ENCODE measurements at regions of chr4 and their contacts with region 1.

Region 1: GRCh38 chr4:56871371-56871866 is 36.3 kb upstream of the REST start:
- DNase-seq: no peak
- H3K4me3 ChIP-seq: no peak overlapping the region
- H3K27ac ChIP-seq: no peak overlapping the region
- H3K4me1 ChIP-seq: no peaks in the 10 kb centered on the region
- H3K27me3 ChIP-seq: no peaks in the 10 kb centered on the region
- CTCF ChIP-seq: no peak

Region 2: DNA sequence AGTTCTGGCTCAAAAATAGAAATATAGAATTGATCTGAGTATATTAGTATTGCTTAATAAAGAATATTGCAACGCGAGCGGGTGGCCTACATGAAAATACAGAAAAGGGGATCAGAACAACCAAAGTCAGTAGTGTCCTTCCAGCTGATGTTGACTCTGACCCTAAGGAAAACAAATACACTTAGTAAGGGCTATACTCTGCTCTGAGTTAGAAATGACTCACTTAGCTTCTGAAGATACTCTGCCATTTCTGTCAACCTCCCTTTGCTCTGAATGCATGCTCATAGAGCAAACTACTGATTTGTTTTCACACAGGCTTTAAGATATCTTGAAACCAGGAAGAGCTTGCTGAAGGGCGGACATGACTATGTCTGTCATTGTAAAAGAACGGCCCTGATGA is 1212.8 kb before region 1 on chr4:
- CTCF ChIA-PET with region 1: no interaction called
- POLR2A ChIA-PET with region 1: no interaction called
- intact Hi-C with region 1: no loop called
- DNase-seq: no peak
- H3K4me3 ChIP-seq: no peak overlapping the region
- H3K27ac ChIP-seq: no peak overlapping the region
- H3K4me1 ChIP-seq: no peaks in the 10 kb centered on the region
- H3K27me3 ChIP-seq: no peaks in the 10 kb centered on the region
- CTCF ChIP-seq: no peak

Region 3: DNA sequence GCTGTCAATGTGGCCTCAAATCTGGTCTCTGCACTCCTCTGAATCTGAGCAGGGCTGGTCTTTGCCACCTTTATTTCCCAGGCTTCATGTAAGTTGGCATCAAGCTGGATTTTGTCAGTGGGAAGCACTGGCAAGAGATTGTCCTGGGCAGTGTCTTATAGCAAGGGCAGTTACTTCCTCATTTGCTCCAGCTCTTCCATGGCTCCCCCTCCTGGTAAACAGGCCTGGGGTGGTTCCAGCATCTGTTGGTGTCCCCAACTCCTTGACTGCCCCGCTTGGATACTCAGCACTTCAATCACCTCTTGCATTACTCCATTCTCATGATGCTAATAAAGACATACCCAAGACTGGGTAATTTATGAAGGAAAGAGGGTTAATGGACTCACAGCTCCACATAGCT is 21.3 kb after region 1 on chr4:
- CTCF ChIA-PET with region 1: no interaction called
- POLR2A ChIA-PET with region 1: no interaction called
- intact Hi-C with region 1: no loop called
- DNase-seq: no peak
- H3K4me3 ChIP-seq: no peak overlapping the region
- H3K27ac ChIP-seq: no peak overlapping the region
- H3K4me1 ChIP-seq: no peaks in the 10 kb centered on the region
- H3K27me3 ChIP-seq: no peaks in the 10 kb centered on the region
- CTCF ChIP-seq: no peak

Region 4: DNA sequence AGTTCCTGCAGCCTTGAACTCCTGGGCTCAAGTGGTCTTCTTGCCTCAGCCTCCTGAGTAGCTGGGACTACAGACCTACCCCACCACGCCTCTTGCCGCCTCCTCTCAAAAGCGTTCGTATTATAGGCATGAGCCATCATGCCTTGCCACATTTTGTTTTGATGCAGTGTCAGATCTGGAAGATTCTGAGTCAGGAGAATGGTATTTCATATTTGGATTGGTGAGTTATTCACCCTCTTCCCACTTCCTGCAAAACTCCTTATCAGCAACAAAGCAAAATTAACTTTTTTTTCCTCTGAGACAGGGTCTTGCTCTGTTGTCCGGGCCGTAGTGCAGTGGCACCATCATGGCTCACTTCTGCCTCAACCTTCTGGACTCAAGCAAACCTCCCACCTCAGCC is 65.8 kb after region 1 on chr4:
- CTCF ChIA-PET with region 1: no interaction called
- POLR2A ChIA-PET with region 1: interaction called, 12 read pairs
- intact Hi-C with region 1: no loop called
- DNase-seq: peak; percentile 38 to 75
- H3K4me3 ChIP-seq: no peak overlapping the region
- H3K27ac ChIP-seq: no peak overlapping the region
- H3K4me1 ChIP-seq: peaks cover 8% of the 10 kb centered on the region; the same call in 1 of the 2 replicates
- H3K27me3 ChIP-seq: no peaks in the 10 kb centered on the region
- CTCF ChIP-seq: no peak

Region 5: GRCh38 chr4:57074744-57075143 is 203.3 kb after region 1 on chr4:
- CTCF ChIA-PET with region 1: no interaction called
- POLR2A ChIA-PET with region 1: no interaction called
- intact Hi-C with region 1: no loop called
- DNase-seq: no peak
- H3K4me3 ChIP-seq: no peak overlapping the region
- H3K27ac ChIP-seq: no peak overlapping the region
- H3K4me1 ChIP-seq: no peaks in the 10 kb centered on the region
- H3K27me3 ChIP-seq: no peaks in the 10 kb centered on the region
- CTCF ChIP-seq: no peak